BJ (cell line): ENCODE measurements at regions of chr7 and their contacts with region 1.

Region 1: GRCh38 chr7:30800785-30801252 is 29.6 kb downstream of the MINDY4 start:
- DNase-seq: no peak
- H3K4me3 ChIP-seq: no peak overlapping the region
- H3K27me3 ChIP-seq: peaks cover 1% of the 10 kb centered on the region; the same call in 1 of the 2 replicates
- CTCF ChIP-seq: peak; percentile 69

Region 2: DNA sequence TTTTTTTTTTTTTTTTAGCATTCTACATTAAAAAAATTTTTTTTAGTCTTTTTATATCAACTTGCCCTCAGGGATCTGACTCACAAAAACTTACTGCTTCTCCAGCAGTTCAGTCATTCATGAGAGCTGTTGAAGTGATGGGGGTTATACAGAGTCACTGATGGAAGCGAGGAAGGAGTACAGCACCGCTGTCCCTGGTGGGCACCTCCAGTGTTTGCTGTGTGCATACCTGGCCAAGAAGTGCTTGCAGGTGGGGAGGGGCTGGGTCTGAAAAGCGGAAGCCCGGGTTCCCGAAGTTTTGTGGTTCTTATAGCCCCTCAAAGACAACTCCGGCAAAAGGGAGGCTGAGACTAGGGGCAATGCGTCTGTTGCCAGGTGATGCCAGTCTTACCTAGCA is 16.6 kb after region 1 on chr7:
- CTCF ChIA-PET with region 1: interaction called, 4 read pairs
- POLR2A ChIA-PET with region 1: interaction called, 14 read pairs
- DNase-seq: no peak
- H3K4me3 ChIP-seq: no peak overlapping the region
- H3K27me3 ChIP-seq: peaks cover 2% of the 10 kb centered on the region; the same call in 1 of the 2 replicates
- CTCF ChIP-seq: no peak

Region 3: GRCh38 chr7:30974605-30975255 is 173.9 kb after region 1 on chr7:
- CTCF ChIA-PET with region 1: interaction called, 21 read pairs
- POLR2A ChIA-PET with region 1: no interaction called
- DNase-seq: no peak
- H3K4me3 ChIP-seq: no peak overlapping the region
- H3K27me3 ChIP-seq: peaks cover 19% of the 10 kb centered on the region
- CTCF ChIP-seq: peak; percentile 74